Activated B cell treated with CpG ODN at 0.5 μM for 24 hours (primary cell): ENCODE measurements at regions of chr18 and their contacts with region 1.

Region 1: GRCh38 chr18:32919799-32920198 is 147.0 kb upstream of the KLHL14 start:
- DNase-seq: no peak
- ATAC-seq: peak; percentile 96
- H3K4me3 Mint-ChIP-seq: peak overlapping the region; percentile 42
- H3K27ac Mint-ChIP-seq: peak overlapping the region; percentile 72
- H3K4me1 Mint-ChIP-seq: peaks cover 47% of the 10 kb centered on the region
- H3K27me3 Mint-ChIP-seq: no peaks in the 10 kb centered on the region
- CTCF ChIP-seq: peak; percentile 72

Region 2: GRCh38 chr18:32470713-32471633 is 448.8 kb before region 1 on chr18 and contains the start of gene GAREM1:
- CTCF ChIA-PET with region 1: no interaction called
- POLR2A ChIA-PET with region 1: no interaction called
- intact Hi-C with region 1: loop called (anchors 10 kb)
- DNase-seq: peak; percentile 67
- ATAC-seq: peak; percentile 95
- H3K4me3 Mint-ChIP-seq: peak within 1 kb of the TSS; percentile 83
- H3K27ac Mint-ChIP-seq: no peak within 1 kb of the TSS
- H3K4me1 Mint-ChIP-seq: peaks cover 27% of the 10 kb centered on the region
- H3K27me3 Mint-ChIP-seq: peaks cover 53% of the 10 kb centered on the region
- CTCF ChIP-seq: no peak
- total RNA-seq, gene GAREM1: not detected in 2 replicates

Region 3: GRCh38 chr18:32760391-32760790 is 159.4 kb before region 1 on chr18:
- CTCF ChIA-PET with region 1: interaction called, 7 read pairs
- POLR2A ChIA-PET with region 1: no interaction called
- intact Hi-C with region 1: loop called (anchors 2 kb)
- DNase-seq: peak; percentile 57
- ATAC-seq: peak; percentile 97
- H3K4me3 Mint-ChIP-seq: peak overlapping the region; percentile 60
- H3K27ac Mint-ChIP-seq: peak overlapping the region; percentile 83
- H3K4me1 Mint-ChIP-seq: peaks cover 93% of the 10 kb centered on the region
- H3K27me3 Mint-ChIP-seq: no peaks in the 10 kb centered on the region
- CTCF ChIP-seq: no peak

Region 4: GRCh38 chr18:32815881-32816280 is 103.9 kb before region 1 on chr18:
- CTCF ChIA-PET with region 1: no interaction called
- POLR2A ChIA-PET with region 1: no interaction called
- intact Hi-C with region 1: loop called (anchors 5 kb)
- DNase-seq: no peak
- ATAC-seq: peak; percentile 34
- H3K4me3 Mint-ChIP-seq: peak overlapping the region; percentile 6
- H3K27ac Mint-ChIP-seq: peak overlapping the region; percentile 14
- H3K4me1 Mint-ChIP-seq: peaks cover 15% of the 10 kb centered on the region
- H3K27me3 Mint-ChIP-seq: no peaks in the 10 kb centered on the region
- CTCF ChIP-seq: no peak

Region 5: DNA sequence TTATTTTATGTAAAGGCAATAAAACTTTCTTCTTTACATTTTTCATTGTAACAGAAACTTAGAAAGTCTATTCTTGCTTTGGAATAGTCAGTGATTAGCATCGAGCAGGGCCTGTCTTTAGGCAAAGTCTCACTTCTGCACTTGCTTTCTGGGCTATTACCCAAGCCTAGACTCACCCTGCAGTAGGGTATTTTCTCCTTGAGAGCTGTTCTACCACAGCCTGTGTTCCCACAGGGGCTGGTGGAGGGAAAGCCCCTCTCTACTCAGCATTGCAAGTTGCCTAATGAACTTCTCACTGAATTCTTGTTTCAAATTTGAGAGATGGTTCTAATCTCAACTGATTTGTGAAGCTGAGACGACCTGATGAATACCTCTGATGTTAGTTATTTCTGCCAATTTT is 35.3 kb before region 1 on chr18:
- CTCF ChIA-PET with region 1: interaction called, 3 read pairs
- POLR2A ChIA-PET with region 1: interaction called, 8 read pairs
- intact Hi-C with region 1: loop called (anchors 1 kb)
- DNase-seq: peak; percentile 51
- ATAC-seq: peak; percentile 99
- H3K4me3 Mint-ChIP-seq: peak overlapping the region; percentile 53
- H3K27ac Mint-ChIP-seq: peak overlapping the region; percentile 89
- H3K4me1 Mint-ChIP-seq: peaks cover 86% of the 10 kb centered on the region
- H3K27me3 Mint-ChIP-seq: no peaks in the 10 kb centered on the region
- CTCF ChIP-seq: no peak

Region 6: GRCh38 chr18:32930695-32931301 is 11.0 kb after region 1 on chr18:
- CTCF ChIA-PET with region 1: no interaction called
- POLR2A ChIA-PET with region 1: no interaction called
- intact Hi-C with region 1: loop called (anchors 1 kb)
- DNase-seq: no peak
- ATAC-seq: peak; percentile 100
- H3K4me3 Mint-ChIP-seq: no peak overlapping the region
- H3K27ac Mint-ChIP-seq: no peak overlapping the region
- H3K4me1 Mint-ChIP-seq: peaks cover 2% of the 10 kb centered on the region
- H3K27me3 Mint-ChIP-seq: peaks cover 2% of the 10 kb centered on the region
- CTCF ChIP-seq: no peak